ENCODE measurements at regions of chr11 and their contacts with region 1.

Region 1: GRCh38 chr11:75445315-75445953 is 12.4 kb upstream of the KLHL35 start:
- DNase-seq: peak; percentile 39
- H3K4me3 ChIP-seq: no peak overlapping the region
- H3K27ac ChIP-seq: no peak overlapping the region
- H3K27me3 ChIP-seq: no peaks in the 10 kb centered on the region
- CTCF ChIP-seq: peak; percentile 96

Region 2: DNA sequence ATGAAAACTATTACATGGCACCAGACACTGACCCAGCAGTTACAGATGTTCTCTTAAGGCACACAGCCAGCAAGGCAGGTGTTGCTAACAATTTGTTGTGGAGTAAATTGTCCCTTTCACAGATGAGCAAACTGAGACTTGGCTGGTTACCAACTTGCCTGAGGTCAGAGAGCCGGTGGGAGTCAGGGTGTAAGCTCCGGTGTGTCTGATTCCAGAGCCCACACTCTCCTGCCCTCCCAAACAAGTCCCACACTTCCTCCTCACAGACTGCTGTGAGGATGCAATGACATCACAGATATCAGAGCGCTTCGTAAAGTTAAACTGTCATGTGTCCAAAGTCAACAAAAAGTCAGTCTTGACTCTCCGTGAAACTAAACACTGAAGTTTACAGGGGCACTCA is 67.8 kb after region 1 on chr11:
- in situ Hi-C with region 1: loop called (anchors 10 kb)
- DNase-seq: peak; percentile 65
- H3K4me3 ChIP-seq: no peak overlapping the region
- H3K27ac ChIP-seq: no peak overlapping the region
- H3K27me3 ChIP-seq: no peaks in the 10 kb centered on the region
- CTCF ChIP-seq: no peak

Region 3: GRCh38 chr11:75562048-75562835 is 116.8 kb after region 1 on chr11 and contains the start of gene SERPINH1:
- in situ Hi-C with region 1: no loop called
- DNase-seq: peak; percentile 84
- H3K4me3 ChIP-seq: peak within 1 kb of the TSS; percentile 94
- H3K27ac ChIP-seq: peak within 1 kb of the TSS; percentile 90
- H3K27me3 ChIP-seq: no peaks in the 10 kb centered on the region
- CTCF ChIP-seq: no peak

Measured in brain microvascular endothelial cell (primary cell).